HepG2 (cell line): ENCODE measurements at regions of chr17 and their contacts with region 1.

Region 1: GRCh38 chr17:73291260-73291801 is 20.5 kb downstream of the CDC42EP4 start:
- DNase-seq: no peak
- ATAC-seq: no peak
- H3K4me3 ChIP-seq: no peak overlapping the region; a peak in 1 of 6 replicates
- H3K27ac ChIP-seq: peak overlapping the region; percentile 15
- H3K4me1 ChIP-seq: peaks cover 95% of the 10 kb centered on the region
- H3K27me3 ChIP-seq: no peaks in the 10 kb centered on the region
- CTCF ChIP-seq: no peak; the same call in 1 of the 2 replicates
- EP300 ChIP-seq: no peak
- POLR2A ChIP-seq: no peak
- RAD21 ChIP-seq: no peak

Region 2: DNA sequence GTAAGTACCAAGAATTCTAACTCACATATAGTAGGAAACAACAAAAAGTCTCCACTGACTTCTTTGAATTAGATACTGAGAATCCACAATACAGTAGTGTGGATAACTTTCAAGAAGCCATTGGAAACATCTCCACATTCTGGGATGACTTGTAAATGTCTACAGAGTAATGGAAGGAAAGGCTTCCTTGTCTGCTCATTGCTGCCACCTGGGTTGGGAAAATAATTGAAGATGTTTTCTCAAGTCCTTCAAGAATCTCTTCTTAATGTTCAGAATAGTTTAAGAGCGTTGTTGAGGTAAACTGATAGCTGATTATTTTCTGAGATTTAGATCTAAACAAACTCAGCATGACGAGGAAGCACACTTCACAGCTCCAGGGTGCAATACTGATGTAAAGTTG is 43.6 kb before region 1 on chr17:
- CTCF ChIA-PET with region 1: no interaction called
- POLR2A ChIA-PET with region 1: no interaction called
- in situ Hi-C with region 1: no loop called
- intact Hi-C with region 1: no loop called
- DNase-seq: no peak
- ATAC-seq: no peak
- H3K4me3 ChIP-seq: no peak overlapping the region
- H3K27ac ChIP-seq: no peak overlapping the region
- H3K4me1 ChIP-seq: peaks cover 11% of the 10 kb centered on the region
- H3K27me3 ChIP-seq: no peaks in the 10 kb centered on the region
- CTCF ChIP-seq: no peak
- EP300 ChIP-seq: no peak
- POLR2A ChIP-seq: no peak
- RAD21 ChIP-seq: no peak

Region 3: DNA sequence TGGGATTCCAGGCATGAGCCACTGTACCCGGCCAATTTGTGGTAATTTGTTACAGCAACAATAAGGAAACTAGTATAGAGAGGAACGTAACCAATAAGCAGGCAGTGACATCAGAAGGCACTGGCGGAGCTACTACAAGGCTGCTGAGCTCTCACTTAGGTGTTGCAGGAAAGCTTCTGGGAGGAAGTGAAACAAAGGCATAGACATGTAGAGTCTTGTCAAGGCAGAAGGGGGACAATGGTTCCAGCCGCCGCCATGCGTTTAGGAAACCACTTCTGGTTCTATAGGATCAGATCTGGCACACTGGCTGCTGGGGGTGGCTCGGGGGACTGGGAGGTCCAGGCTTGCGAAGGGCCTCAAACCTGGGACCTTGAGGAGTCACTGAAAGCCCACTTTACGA is 20.3 kb before region 1 on chr17:
- CTCF ChIA-PET with region 1: no interaction called
- POLR2A ChIA-PET with region 1: interaction called, 8 read pairs
- in situ Hi-C with region 1: no loop called
- intact Hi-C with region 1: loop called (anchors 2 kb)
- DNase-seq: no peak
- ATAC-seq: no peak
- H3K4me3 ChIP-seq: no peak overlapping the region
- H3K27ac ChIP-seq: no peak overlapping the region
- H3K4me1 ChIP-seq: peaks cover 79% of the 10 kb centered on the region
- H3K27me3 ChIP-seq: no peaks in the 10 kb centered on the region
- CTCF ChIP-seq: no peak
- EP300 ChIP-seq: no peak
- POLR2A ChIP-seq: no peak
- RAD21 ChIP-seq: no peak

Region 4: DNA sequence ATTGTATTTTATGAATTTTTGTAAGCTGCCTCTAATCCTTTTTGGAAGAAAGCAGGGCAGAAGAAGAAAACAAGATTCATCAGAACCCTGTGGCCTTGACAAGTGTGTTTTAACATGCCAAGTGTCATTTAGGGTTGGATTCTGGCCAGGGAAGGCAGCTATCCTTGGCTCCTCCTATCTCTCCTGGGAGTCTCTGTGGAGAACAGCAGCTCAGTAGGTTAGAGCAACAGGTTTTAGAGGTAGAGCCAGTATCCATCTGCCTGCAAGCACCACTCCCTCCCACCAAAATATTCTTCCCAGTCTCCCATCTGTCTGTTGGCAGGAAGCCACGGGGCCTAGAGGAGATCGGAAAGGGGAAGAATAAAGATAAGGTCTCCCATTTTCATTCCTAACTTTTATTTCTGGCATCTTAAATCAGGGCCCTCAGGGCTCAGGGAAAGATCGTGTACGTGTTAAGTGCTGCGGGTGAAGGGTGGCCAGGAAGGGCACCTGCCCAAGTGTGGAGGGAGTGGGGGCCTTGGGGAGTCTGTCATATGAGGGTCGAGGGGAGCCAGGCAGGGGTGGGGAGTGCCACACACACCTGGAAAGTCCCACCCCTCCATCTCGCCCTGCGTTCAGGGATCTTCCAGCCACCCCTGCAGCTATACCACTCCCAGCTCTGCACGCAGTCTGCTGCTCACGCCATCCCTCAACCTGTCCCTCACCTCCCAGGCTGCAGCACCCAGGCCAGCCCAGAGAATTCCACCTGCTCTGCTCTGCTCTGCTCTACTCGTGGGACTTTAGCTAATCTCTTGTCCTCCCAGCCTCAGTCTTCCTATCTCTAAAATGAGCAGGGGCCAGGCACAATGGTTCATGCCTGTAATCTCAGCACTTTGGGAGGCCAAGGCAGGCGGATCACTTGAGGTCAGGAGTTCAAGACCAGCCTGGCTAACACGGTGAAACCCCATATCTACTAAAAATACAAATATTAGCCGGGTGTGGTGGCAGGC is 12.6 kb before region 1 on chr17:
- CTCF ChIA-PET with region 1: no interaction called
- POLR2A ChIA-PET with region 1: interaction called, 19 read pairs
- in situ Hi-C with region 1: no loop called
- intact Hi-C with region 1: loop called (anchors 2 kb)
- DNase-seq: no peak
- ATAC-seq: peak; percentile 60
- H3K4me3 ChIP-seq: peak overlapping the region in 1 of 3 experiments; percentile 7; a peak in 1 of 6 replicates
- H3K27ac ChIP-seq: peak overlapping the region; percentile 74
- H3K4me1 ChIP-seq: peaks cover 48% of the 10 kb centered on the region
- H3K27me3 ChIP-seq: no peaks in the 10 kb centered on the region
- CTCF ChIP-seq: no peak
- EP300 ChIP-seq: no peak
- POLR2A ChIP-seq: no peak
- RAD21 ChIP-seq: no peak

Region 5: DNA sequence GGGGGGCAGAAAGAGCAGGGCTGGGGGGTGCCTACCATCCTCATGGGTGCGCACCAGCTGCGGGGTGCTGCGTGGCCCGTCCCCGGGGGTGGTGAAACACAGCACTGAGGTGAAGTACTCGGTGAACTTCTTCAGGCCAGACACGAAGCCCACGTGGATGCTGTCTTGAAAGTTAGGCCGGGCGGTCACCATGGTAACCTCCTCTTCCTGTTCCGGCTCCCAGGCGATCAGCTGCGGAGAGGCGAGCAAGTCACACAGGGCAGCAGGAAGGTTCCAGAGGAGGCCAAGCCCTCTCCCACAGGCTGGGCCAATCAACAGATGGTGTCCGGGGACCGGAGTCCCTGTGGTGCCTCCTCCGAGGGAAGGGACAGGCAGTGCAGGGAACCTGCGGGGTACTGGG is 110.6 kb after region 1 on chr17:
- CTCF ChIA-PET with region 1: no interaction called
- POLR2A ChIA-PET with region 1: no interaction called
- in situ Hi-C with region 1: no loop called
- intact Hi-C with region 1: no loop called
- DNase-seq: peak; percentile 31
- ATAC-seq: peak; percentile 69
- H3K4me3 ChIP-seq: no peak overlapping the region; a peak in 1 of 6 replicates
- H3K27ac ChIP-seq: no peak overlapping the region
- H3K4me1 ChIP-seq: 0 out of 2 replicates have a peak, but pooled peaks cover 5% of the 10 kb centered on the region
- H3K27me3 ChIP-seq: peaks cover 9 to 38% of the 10 kb centered on the region in 2 experiments; a peak in 4 of 5 replicates
- CTCF ChIP-seq: no peak
- EP300 ChIP-seq: no peak
- POLR2A ChIP-seq: no peak
- RAD21 ChIP-seq: no peak